Left ventricle myocardium superior (tissue), 1 donor: ENCODE measurements at regions of chr22 and their contacts with region 1.

Region 1: DNA sequence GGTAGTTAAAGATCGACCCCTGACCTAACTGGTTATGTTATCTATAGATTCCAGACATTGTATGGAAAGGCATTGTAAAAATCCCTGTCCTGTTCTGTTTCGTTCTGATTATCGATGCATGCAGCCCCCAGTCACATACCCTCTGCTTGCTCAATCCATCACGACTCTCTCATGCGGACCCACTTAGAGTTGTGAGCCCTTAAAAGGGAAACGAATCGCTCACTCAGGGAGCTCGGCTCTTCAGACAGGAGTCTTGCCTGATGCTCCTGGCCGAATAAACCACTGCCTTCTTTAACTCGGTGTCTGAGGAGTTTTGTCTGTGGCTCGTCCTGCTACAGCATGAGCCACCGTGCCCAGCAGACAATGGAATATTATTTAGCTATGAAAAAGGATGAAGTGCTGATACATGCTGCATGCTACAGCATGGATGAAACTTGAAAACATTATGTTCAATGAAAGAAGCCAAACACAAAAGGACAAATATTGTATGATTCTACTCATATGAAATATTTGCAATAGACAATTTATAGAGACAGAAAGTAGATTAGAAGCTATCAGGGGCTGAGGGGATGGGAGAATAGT is 12.0 kb upstream of the LGALS2 start:
- DNase-seq: no peak
- ATAC-seq: no peak

Region 2: GRCh38 chr22:37538590-37539357 is 53.1 kb before region 1 on chr22:
- intact Hi-C with region 1: loop called (anchors 2 kb)
- DNase-seq: peak; percentile 94
- ATAC-seq: peak; percentile 99